Activated B cell treated with CpG ODN at 0.5 μM for 24 hours (primary cell): ENCODE measurements at regions of chr4 and their contacts with region 1.

Region 1: DNA sequence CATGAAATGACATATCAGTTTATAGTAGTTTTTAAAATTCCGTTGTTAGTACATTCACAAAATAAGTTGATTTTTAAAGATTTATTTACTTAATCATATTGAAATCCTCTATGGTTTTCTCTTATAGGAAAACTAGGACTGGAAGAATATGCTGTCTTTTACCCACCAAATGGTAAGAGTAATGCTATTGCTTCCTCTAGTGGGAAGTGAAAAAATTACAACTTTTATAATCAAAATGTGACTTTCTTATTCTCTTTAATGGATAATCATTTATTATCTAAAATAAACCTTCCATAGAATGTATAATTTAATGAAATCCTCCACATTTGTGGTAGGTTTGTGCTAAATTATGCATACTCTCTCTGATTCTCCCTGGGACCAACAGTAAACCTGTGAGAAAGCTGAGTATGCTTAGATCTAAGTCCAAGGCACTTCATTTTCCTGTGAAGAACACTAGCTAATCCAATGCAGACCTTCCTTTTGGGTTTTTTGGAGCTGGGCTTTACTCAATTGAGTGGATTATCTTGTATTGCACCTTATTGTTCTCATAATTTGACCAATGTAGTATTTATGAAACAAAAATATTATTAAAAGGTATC is 136.2 kb downstream of the TBC1D19 start:
- DNase-seq: no peak
- ATAC-seq: no peak
- H3K4me3 Mint-ChIP-seq: no peak overlapping the region
- H3K27ac Mint-ChIP-seq: no peak overlapping the region
- H3K4me1 Mint-ChIP-seq: peaks cover 10% of the 10 kb centered on the region
- H3K27me3 Mint-ChIP-seq: no peaks in the 10 kb centered on the region
- CTCF ChIP-seq: no peak

Region 2: GRCh38 chr4:26299254-26299882 is 420.7 kb before region 1 on chr4:
- CTCF ChIA-PET with region 1: no interaction called
- POLR2A ChIA-PET with region 1: no interaction called
- intact Hi-C with region 1: no loop called
- DNase-seq: no peak
- ATAC-seq: no peak
- H3K4me3 Mint-ChIP-seq: no peak overlapping the region
- H3K27ac Mint-ChIP-seq: no peak overlapping the region
- H3K4me1 Mint-ChIP-seq: no peaks in the 10 kb centered on the region
- H3K27me3 Mint-ChIP-seq: peaks cover under 1% of the 10 kb centered on the region
- CTCF ChIP-seq: no peak

Region 3: GRCh38 chr4:26459054-26459755 is 260.8 kb before region 1 on chr4:
- CTCF ChIA-PET with region 1: interaction called, 4 read pairs
- POLR2A ChIA-PET with region 1: no interaction called
- intact Hi-C with region 1: loop called (anchors 1 kb)
- DNase-seq: no peak
- ATAC-seq: peak; percentile 64
- H3K4me3 Mint-ChIP-seq: peak overlapping the region; percentile 55
- H3K27ac Mint-ChIP-seq: no peak overlapping the region
- H3K4me1 Mint-ChIP-seq: peaks cover 6% of the 10 kb centered on the region
- H3K27me3 Mint-ChIP-seq: peaks cover 4% of the 10 kb centered on the region
- CTCF ChIP-seq: no peak

Region 4: DNA sequence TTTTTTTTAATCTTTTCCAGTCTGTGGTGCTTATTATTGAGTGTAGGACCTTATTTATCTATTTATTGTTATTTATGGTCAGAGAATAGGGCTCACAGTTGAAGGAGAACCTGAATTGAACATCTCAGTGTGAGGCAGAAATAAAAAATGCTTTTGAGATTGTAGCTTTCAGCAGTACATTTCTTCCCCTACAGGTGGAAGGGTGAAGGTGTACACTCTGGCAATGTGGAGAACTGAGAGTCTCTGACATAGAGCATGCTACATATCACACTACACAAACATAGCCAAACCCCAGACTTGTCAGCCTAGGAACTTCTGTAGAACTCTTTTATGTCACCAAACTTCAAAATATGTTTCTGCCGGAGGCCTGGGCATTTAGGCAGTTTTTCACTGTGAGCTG is 280.8 kb after region 1 on chr4:
- CTCF ChIA-PET with region 1: no interaction called
- POLR2A ChIA-PET with region 1: no interaction called
- intact Hi-C with region 1: loop called (anchors 2 kb)
- DNase-seq: no peak
- ATAC-seq: peak; percentile 89
- H3K4me3 Mint-ChIP-seq: no peak overlapping the region
- H3K27ac Mint-ChIP-seq: peak overlapping the region; percentile 21
- H3K4me1 Mint-ChIP-seq: peaks cover 26% of the 10 kb centered on the region
- H3K27me3 Mint-ChIP-seq: no peaks in the 10 kb centered on the region
- CTCF ChIP-seq: no peak